ENCODE measurements at regions of chr17 and their contacts with region 1.

Region 1: GRCh38 chr17:76623271-76624146 is 20.0 kb downstream of the ST6GALNAC1 start:
- DNase-seq: peak; percentile 67 to 73 (median 70)
- H3K4me3 ChIP-seq: no peak overlapping the region
- H3K4me3 Mint-ChIP-seq: no peak overlapping the region
- H3K27ac ChIP-seq: no peak overlapping the region
- H3K27ac Mint-ChIP-seq: peak overlapping the region in 1 of 7 donors; percentile 55
- H3K4me1 ChIP-seq: peaks cover 4% of the 10 kb centered on the region
- H3K4me1 Mint-ChIP-seq: peaks cover 0 to 6% (median under 1%) of the 10 kb centered on the region in 4 donors
- H3K27me3 ChIP-seq: no peaks in the 10 kb centered on the region
- H3K27me3 Mint-ChIP-seq: peaks cover 0 to 1% of the 10 kb centered on the region in 2 donors

Region 2: GRCh38 chr17:76121932-76122430 is 501.5 kb before region 1 on chr17:
- CTCF ChIA-PET with region 1: no interaction called
- POLR2A ChIA-PET with region 1: no interaction called
- intact Hi-C with region 1: no loop called
- DNase-seq: no peak
- H3K4me3 ChIP-seq: peak overlapping the region in 1 of 2 donors; percentile 60
- H3K4me3 Mint-ChIP-seq: peak overlapping the region in 4 of 8 donors; percentile 21 to 49 (median 37)
- H3K27ac ChIP-seq: peak overlapping the region; percentile 29
- H3K27ac Mint-ChIP-seq: peak overlapping the region in 6 of 7 donors; percentile 21 to 86 (median 65)
- H3K4me1 ChIP-seq: peaks cover 10% of the 10 kb centered on the region
- H3K4me1 Mint-ChIP-seq: peaks cover 4 to 12% (median 8%) of the 10 kb centered on the region in 4 donors
- H3K27me3 ChIP-seq: no peaks in the 10 kb centered on the region
- H3K27me3 Mint-ChIP-seq: no peaks in the 10 kb centered on the region

Region 3: DNA sequence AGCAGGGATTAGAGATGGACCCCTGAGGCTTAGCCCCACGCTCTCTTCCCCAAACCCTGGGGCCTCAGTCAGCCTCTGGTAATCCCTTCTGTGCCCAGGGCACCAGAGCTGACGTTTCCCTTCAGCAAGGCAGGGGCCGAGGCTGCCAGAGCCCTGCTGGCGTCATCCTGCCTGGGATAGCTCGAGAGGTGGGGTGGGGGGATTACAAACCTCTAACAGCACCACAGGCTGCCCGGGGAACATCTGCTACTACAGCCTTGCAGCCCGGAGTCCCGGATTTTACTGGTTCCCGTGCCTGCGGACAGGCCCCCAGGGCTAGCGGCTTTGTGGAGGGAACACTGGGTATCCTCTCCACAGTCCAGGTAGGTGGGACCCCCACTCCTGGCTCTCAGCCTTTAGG is 156.1 kb before region 1 on chr17 and contains the start of gene AANAT:
- CTCF ChIA-PET with region 1: interaction called, 3 read pairs
- POLR2A ChIA-PET with region 1: no interaction called
- intact Hi-C with region 1: loop called (anchors 1 kb)
- DNase-seq: no peak
- H3K4me3 ChIP-seq: no peak within 1 kb of the TSS
- H3K4me3 Mint-ChIP-seq: no peak within 1 kb of the TSS
- H3K27ac ChIP-seq: no peak within 1 kb of the TSS
- H3K27ac Mint-ChIP-seq: peak within 1 kb of the TSS in 1 of 7 donors; percentile 29
- H3K4me1 ChIP-seq: peaks cover 4% of the 10 kb centered on the region
- H3K4me1 Mint-ChIP-seq: peaks cover 3 to 6% (median 3%) of the 10 kb centered on the region in 4 donors
- H3K27me3 ChIP-seq: no peaks in the 10 kb centered on the region
- H3K27me3 Mint-ChIP-seq: no peaks in the 10 kb centered on the region
- total RNA-seq, gene AANAT: not detected

Region 4: GRCh38 chr17:76557368-76558197 is 65.9 kb before region 1 on chr17:
- CTCF ChIA-PET with region 1: interaction called, 113 read pairs
- POLR2A ChIA-PET with region 1: interaction called, 24 read pairs
- intact Hi-C with region 1: loop called (anchors 1 kb)
- DNase-seq: peak; percentile 94 to 95 (median 94)
- H3K4me3 ChIP-seq: peak overlapping the region; percentile 87 to 99
- H3K4me3 Mint-ChIP-seq: peak overlapping the region; percentile 94 to 99 (median 98)
- H3K27ac ChIP-seq: peak overlapping the region; percentile 94
- H3K27ac Mint-ChIP-seq: peak overlapping the region; percentile 99 to 100 (median 99)
- H3K4me1 ChIP-seq: peaks cover 60% of the 10 kb centered on the region
- H3K4me1 Mint-ChIP-seq: peaks cover 35 to 74% (median 50%) of the 10 kb centered on the region in 4 donors
- H3K27me3 ChIP-seq: no peaks in the 10 kb centered on the region
- H3K27me3 Mint-ChIP-seq: no peaks in the 10 kb centered on the region

Region 5: DNA sequence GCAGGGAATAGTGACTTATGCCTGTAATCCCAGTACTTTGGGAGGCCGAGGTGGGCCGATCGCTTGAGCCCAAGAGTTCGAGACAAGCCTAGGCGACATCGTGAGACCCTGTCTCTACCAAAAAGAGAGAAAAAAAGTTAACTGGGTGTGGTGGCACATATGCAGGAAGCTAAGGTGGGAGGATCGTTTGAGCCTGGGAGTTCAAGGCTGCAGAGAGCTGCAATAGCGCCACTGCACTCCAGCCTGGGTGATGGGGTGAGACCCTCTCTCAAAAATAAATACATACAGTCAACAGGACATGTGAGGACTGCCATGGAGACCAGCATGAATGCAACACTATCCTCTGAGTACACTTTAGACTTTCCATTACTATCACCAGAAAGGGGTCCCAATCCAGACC is 22.4 kb before region 1 on chr17:
- CTCF ChIA-PET with region 1: interaction called, 10 read pairs
- POLR2A ChIA-PET with region 1: no interaction called
- intact Hi-C with region 1: no loop called
- DNase-seq: no peak
- H3K4me3 ChIP-seq: no peak overlapping the region
- H3K4me3 Mint-ChIP-seq: peak overlapping the region in 6 of 8 donors; percentile 17 to 63 (median 30)
- H3K27ac ChIP-seq: no peak overlapping the region
- H3K27ac Mint-ChIP-seq: peak overlapping the region in 2 of 7 donors; percentile 42 to 65
- H3K4me1 ChIP-seq: peaks cover 20% of the 10 kb centered on the region
- H3K4me1 Mint-ChIP-seq: peaks cover 16 to 26% (median 20%) of the 10 kb centered on the region in 4 donors
- H3K27me3 ChIP-seq: no peaks in the 10 kb centered on the region
- H3K27me3 Mint-ChIP-seq: peaks cover 0 to 9% of the 10 kb centered on the region in 2 donors

Region 6: DNA sequence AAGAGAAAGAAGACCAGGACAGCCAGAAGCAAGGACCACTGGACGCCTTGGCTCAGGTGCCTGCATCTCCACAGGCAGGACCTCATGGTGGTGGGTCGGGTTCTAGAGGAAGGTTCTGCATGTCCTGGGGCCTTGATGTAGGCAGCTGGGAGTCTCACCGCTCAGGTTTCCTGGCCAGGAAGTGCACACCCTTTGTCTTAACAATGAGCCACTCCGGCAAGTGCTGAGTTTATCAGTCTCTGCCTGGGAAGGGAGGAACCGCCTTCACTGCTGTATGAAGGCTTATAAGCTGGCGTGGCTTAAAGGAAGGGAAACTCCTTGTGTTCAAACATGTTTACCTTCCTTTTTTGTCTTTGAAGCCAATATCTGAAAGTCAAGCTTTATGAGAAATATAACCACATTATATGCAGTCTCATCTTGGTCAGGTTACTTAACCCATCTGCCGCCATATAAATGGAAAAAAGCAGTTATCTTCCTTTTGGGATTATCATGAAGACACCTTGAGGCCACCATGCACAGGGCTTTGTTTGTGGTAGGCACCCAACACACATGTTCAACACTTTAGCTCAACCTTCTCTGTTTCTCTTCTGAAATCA is 20.1 kb after region 1 on chr17 and contains the start of gene ST6GALNAC1:
- CTCF ChIA-PET with region 1: interaction called, 40 read pairs
- POLR2A ChIA-PET with region 1: interaction called, 3 read pairs
- intact Hi-C with region 1: no loop called
- DNase-seq: peak; percentile 28 to 66 (median 55)
- H3K4me3 ChIP-seq: peak within 1 kb of the TSS; percentile 36 to 59
- H3K4me3 Mint-ChIP-seq: peak within 1 kb of the TSS; percentile 81 to 96 (median 88)
- H3K27ac ChIP-seq: peak within 1 kb of the TSS; percentile 33
- H3K27ac Mint-ChIP-seq: peak within 1 kb of the TSS; percentile 67 to 91 (median 84)
- H3K4me1 ChIP-seq: peaks cover 36% of the 10 kb centered on the region
- H3K4me1 Mint-ChIP-seq: peaks cover 16 to 37% (median 34%) of the 10 kb centered on the region in 4 donors
- H3K27me3 ChIP-seq: no peaks in the 10 kb centered on the region
- H3K27me3 Mint-ChIP-seq: no peaks in the 10 kb centered on the region
- total RNA-seq, gene ST6GALNAC1: 12.7 to 14.6 TPM

Region 7: DNA sequence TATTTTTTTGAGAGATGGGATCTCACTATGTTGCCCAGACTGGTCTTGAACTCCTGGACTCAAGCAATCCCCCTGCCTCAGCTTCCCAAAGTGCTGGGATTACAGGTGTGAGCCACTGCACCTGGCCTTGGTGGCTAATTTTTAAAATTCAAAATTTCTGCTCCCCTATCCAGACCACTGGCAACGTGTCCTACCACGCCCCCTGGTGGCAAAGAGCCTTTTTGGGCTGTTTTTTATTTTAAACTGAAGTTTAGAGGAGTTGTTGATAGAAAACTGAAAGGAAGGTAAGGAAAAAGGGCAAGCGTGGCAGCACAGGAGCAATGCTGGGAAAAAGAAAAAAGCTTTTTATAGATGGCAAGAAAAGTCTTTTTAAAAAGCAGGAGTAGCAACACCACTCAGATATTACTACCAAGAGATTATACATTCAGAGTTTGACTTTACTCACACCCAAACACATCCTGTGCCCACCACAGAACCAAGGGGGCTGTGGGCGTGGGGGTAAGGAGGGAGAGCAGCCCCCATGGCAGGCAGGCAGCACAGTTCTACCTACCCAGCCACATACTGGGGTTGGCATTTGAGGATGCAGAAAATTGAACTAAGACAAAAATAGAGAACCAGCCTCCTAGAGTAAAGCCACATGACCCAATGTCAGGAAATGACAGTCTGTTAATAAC is 91.5 kb after region 1 on chr17:
- CTCF ChIA-PET with region 1: interaction called, 31 read pairs
- POLR2A ChIA-PET with region 1: no interaction called
- intact Hi-C with region 1: no loop called
- DNase-seq: peak; percentile 63 to 75 (median 71)
- H3K4me3 ChIP-seq: no peak overlapping the region
- H3K4me3 Mint-ChIP-seq: peak overlapping the region in 5 of 8 donors; percentile 1 to 33 (median 14)
- H3K27ac ChIP-seq: peak overlapping the region; percentile 53
- H3K27ac Mint-ChIP-seq: peak overlapping the region; percentile 72 to 94 (median 87)
- H3K4me1 ChIP-seq: peaks cover 39% of the 10 kb centered on the region
- H3K4me1 Mint-ChIP-seq: peaks cover 24 to 46% (median 35%) of the 10 kb centered on the region in 4 donors
- H3K27me3 ChIP-seq: no peaks in the 10 kb centered on the region
- H3K27me3 Mint-ChIP-seq: no peaks in the 10 kb centered on the region

Region 8: GRCh38 chr17:76781056-76781982 is 157.8 kb after region 1 on chr17:
- CTCF ChIA-PET with region 1: no interaction called
- POLR2A ChIA-PET with region 1: no interaction called
- intact Hi-C with region 1: no loop called
- DNase-seq: peak in 1 of 5 donors; percentile 8
- H3K4me3 ChIP-seq: no peak overlapping the region
- H3K4me3 Mint-ChIP-seq: no peak overlapping the region
- H3K27ac ChIP-seq: no peak overlapping the region
- H3K27ac Mint-ChIP-seq: peak overlapping the region in 2 of 7 donors; percentile 17 to 66
- H3K4me1 ChIP-seq: peaks cover under 1% of the 10 kb centered on the region
- H3K4me1 Mint-ChIP-seq: peaks cover 0 to 4% (median under 1%) of the 10 kb centered on the region in 4 donors
- H3K27me3 ChIP-seq: no peaks in the 10 kb centered on the region
- H3K27me3 Mint-ChIP-seq: no peaks in the 10 kb centered on the region

Region 9: DNA sequence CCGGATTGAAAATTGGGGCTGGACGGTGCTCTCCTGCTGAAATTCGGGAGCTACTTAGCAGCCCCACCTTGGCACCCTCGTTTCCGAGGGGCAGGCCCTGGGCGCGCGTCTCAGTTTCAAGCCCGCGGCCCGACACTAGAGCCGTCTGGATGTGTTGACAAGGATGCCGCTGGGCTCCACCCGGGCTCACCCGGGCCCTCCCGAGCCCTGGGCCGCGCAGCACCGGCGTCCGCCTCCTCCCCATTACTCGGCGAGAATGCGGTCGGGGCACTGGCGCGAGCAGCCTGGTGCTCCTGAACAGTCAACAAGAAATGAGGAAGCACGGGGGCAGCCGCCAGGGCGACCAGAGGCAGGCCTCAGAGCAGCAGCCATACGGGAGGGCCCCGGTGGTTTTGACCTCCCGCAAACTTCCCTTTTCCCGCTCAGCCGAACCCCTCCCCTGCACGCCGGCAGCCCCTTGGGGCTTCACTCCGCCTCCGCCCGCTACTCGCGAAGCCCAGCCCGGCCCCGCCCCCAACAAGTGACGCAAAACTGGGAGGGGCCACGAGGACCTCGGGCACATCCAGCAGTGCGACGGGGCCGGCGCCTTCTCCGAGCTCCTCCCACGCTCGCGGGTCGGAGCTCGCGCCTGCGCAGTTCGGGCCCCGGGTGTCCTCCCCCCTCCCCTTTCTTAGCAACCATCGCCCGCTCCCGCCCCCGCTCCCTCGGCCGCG is 516.8 kb after region 1 on chr17:
- CTCF ChIA-PET with region 1: no interaction called
- POLR2A ChIA-PET with region 1: no interaction called
- intact Hi-C with region 1: no loop called
- DNase-seq: peak; percentile 98 to 99 (median 99)
- H3K4me3 ChIP-seq: peak overlapping the region; percentile 38 to 68
- H3K4me3 Mint-ChIP-seq: peak overlapping the region; percentile 81 to 92 (median 85)
- H3K27ac ChIP-seq: peak overlapping the region; percentile 75
- H3K27ac Mint-ChIP-seq: peak overlapping the region; percentile 78 to 95 (median 93)
- H3K4me1 ChIP-seq: peaks cover 47% of the 10 kb centered on the region
- H3K4me1 Mint-ChIP-seq: peaks cover 28 to 65% (median 49%) of the 10 kb centered on the region in 4 donors
- H3K27me3 ChIP-seq: no peaks in the 10 kb centered on the region
- H3K27me3 Mint-ChIP-seq: no peaks in the 10 kb centered on the region

Measured in CD4-positive, alpha-beta memory T cell (primary cell).